ENCODE measurements at regions of chr9 and their contacts with region 1.

Region 1: DNA sequence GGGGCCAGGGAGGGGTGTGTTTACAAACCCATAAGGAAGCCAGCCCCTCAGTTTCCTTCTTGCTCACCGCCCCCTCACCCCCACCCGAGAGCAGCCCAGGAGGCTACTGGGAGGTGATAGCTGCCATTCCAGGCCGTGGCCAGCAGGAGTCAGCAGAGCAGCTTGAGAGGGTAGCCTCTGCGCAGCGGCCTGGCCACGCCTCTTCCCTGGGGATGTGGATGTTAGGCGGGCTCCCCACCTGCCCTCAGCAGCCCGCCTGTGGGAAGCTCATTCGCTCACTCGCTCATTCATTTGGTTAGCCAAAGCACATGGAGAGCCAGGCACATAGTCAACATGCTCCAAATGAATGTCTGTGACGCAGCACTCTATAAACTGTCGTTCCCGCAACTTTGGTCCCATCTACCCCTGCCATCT is 6.1 kb upstream of the DPM2 start:
- DNase-seq: peak; percentile 81 to 88 (median 84)
- ATAC-seq: peak; percentile 70 to 85 (median 75)
- H3K4me3 ChIP-seq: no peak overlapping the region
- H3K27ac ChIP-seq: no peak overlapping the region
- H3K4me1 ChIP-seq: no peaks in the 10 kb centered on the region
- H3K27me3 ChIP-seq: no peaks in the 10 kb centered on the region
- CTCF ChIP-seq: peak; percentile 77 to 90 (median 84)
- POLR2A ChIP-seq: no peak

Region 2: GRCh38 chr9:127796225-127796813 is 147.4 kb before region 1 on chr9:
- intact Hi-C with region 1: no loop called
- DNase-seq: peak; percentile 83 to 94 (median 92)
- ATAC-seq: peak; percentile 52 to 77 (median 68)
- H3K4me3 ChIP-seq: no peak overlapping the region
- H3K27ac ChIP-seq: peak overlapping the region; percentile 82 to 98 (median 82)
- H3K4me1 ChIP-seq: peaks cover 0 to 87% (median 40%) of the 10 kb centered on the region in 4 donors
- H3K27me3 ChIP-seq: no peaks in the 10 kb centered on the region
- CTCF ChIP-seq: no peak
- POLR2A ChIP-seq: no peak

Region 3: GRCh38 chr9:127838375-127839078 is 105.2 kb before region 1 on chr9:
- intact Hi-C with region 1: no loop called
- DNase-seq: peak; percentile 74 to 94 (median 80)
- ATAC-seq: peak; percentile 86 to 92 (median 88)
- H3K4me3 ChIP-seq: peak overlapping the region in 2 of 3 donors; percentile 12 to 14
- H3K27ac ChIP-seq: peak overlapping the region; percentile 66 to 92 (median 76)
- H3K4me1 ChIP-seq: peaks cover 0 to 30% (median 18%) of the 10 kb centered on the region in 4 donors
- H3K27me3 ChIP-seq: no peaks in the 10 kb centered on the region
- CTCF ChIP-seq: no peak
- POLR2A ChIP-seq: peak; percentile 85

Region 4: GRCh38 chr9:128034821-128035764 is 91.4 kb after region 1 on chr9:
- intact Hi-C with region 1: loop called (anchors 5 kb)
- DNase-seq: peak; percentile 60 to 86 (median 80)
- ATAC-seq: peak; percentile 98 to 99 (median 99)
- H3K4me3 ChIP-seq: no peak overlapping the region
- H3K27ac ChIP-seq: no peak overlapping the region
- H3K4me1 ChIP-seq: peaks cover 0 to 4% (median 0%) of the 10 kb centered on the region in 4 donors
- H3K27me3 ChIP-seq: no peaks in the 10 kb centered on the region
- CTCF ChIP-seq: peak; percentile 87 to 97 (median 91)
- POLR2A ChIP-seq: no peak